ENCODE measurements at regions of chr4 and their contacts with region 1.

Region 1: DNA sequence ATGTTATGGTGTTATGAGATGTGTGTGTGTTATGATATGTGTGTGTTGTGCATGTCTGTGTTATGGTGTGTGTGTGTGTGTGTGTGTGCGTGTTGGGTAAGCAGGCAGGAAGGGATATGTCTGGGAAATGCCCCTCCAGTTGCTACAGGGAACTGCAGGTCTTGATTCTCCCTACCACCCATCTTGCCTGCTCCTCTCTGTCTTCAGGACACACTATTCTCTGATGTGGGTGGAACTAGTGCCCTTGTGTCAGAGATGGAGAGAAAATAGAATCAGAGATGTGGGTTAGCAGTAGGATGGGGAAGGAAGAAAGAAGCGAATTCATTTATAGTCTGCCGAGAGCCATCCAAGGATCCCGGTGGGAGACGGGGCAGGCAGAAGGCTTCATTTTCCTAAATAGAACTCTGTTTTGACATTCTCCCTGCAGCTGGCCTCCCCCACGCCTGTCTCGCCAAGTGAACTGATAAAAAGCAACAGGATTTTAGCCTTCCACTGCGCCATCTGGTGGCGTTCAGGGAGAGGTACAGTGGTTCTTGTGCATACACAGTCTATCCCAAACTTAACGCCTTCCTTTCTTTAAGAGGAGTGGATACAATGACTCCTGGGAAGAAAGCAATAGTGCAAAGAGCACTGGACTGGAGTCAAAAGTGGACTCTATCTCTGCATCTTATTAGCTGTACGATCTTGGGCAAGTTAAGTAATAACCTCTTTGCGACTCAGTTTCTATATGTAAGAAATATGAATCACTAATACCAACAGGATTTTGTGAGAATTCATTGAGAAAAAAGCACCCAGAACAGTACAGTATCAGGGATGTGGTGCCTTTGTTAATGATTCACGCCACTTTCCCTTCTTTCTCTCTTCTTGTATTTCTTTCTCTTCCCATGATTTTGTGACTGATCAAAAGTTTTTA is 14.1 kb upstream of the MGST2 start:
- DNase-seq: peak; percentile 75 to 94 (median 88)
- H3K4me3 ChIP-seq: no peak overlapping the region
- H3K27ac ChIP-seq: no peak overlapping the region
- H3K4me1 ChIP-seq: peaks cover 0 to 5% of the 10 kb centered on the region in 2 donors
- H3K27me3 ChIP-seq: no peaks in the 10 kb centered on the region
- CTCF ChIP-seq: peak; percentile 84 to 94 (median 92)
- POLR2A ChIP-seq: no peak

Region 2: GRCh38 chr4:139099366-139099982 is 552.1 kb before region 1 on chr4:
- intact Hi-C with region 1: no loop called
- DNase-seq: peak; percentile 71 to 84 (median 73)
- H3K4me3 ChIP-seq: no peak overlapping the region
- H3K27ac ChIP-seq: no peak overlapping the region
- H3K4me1 ChIP-seq: no peaks in the 10 kb centered on the region
- H3K27me3 ChIP-seq: no peaks in the 10 kb centered on the region
- CTCF ChIP-seq: peak; percentile 79 to 92 (median 83)
- POLR2A ChIP-seq: no peak

Region 3: DNA sequence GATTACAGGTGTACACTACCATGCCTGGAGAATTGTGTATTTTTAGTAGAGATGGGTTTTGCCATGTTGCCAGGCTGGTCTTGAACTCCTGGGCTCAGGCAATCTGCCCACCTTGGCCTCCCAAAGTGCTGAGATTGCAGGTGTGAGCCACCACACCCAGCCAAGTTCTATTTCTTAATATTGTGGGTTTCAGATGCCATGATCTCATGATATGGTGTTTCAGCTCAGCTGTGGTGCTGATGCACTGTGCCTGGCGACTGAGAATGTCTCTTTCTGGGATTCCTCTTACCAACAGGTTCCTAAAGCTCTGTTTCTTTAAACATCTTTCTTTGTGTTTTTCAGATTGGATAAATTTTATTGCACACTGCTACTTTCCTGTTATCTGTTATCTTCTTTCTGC is 332.0 kb before region 1 on chr4:
- intact Hi-C with region 1: no loop called
- DNase-seq: no peak
- H3K4me3 ChIP-seq: no peak overlapping the region
- H3K27ac ChIP-seq: no peak overlapping the region
- H3K4me1 ChIP-seq: peaks cover 14 to 36% of the 10 kb centered on the region in 2 donors
- H3K27me3 ChIP-seq: no peaks in the 10 kb centered on the region
- CTCF ChIP-seq: no peak
- POLR2A ChIP-seq: no peak

Region 4: DNA sequence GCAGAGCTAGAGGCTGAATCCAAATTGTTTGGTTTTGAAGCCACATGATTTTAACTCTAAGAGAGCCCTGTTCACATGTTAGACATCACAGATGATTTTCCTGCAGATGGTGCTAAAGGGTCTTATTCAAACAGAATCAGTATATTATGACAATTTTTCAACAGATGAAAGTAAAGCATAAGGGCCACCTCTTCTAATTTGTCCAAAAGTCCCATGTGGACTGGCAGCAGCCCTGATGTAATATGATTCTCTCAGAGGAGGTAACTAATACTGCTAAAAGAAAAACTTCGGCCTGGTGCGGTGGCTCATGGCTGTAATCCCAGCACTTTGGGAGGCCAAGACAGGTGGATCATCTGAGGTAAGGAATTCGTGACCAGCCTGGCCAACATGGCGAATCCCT is 69.5 kb before region 1 on chr4:
- intact Hi-C with region 1: no loop called
- DNase-seq: peak in 1 of 7 donors; percentile 39
- H3K4me3 ChIP-seq: no peak overlapping the region
- H3K27ac ChIP-seq: no peak overlapping the region
- H3K4me1 ChIP-seq: no peaks in the 10 kb centered on the region
- H3K27me3 ChIP-seq: no peaks in the 10 kb centered on the region
- CTCF ChIP-seq: peak in 1 of 6 experiments; percentile 16
- POLR2A ChIP-seq: no peak

Region 5: GRCh38 chr4:139603576-139604387 is 47.8 kb before region 1 on chr4:
- intact Hi-C with region 1: loop called (anchors 5 kb)
- DNase-seq: peak in 6 of 7 donors; percentile 33 to 64 (median 60)
- H3K4me3 ChIP-seq: no peak overlapping the region
- H3K27ac ChIP-seq: no peak overlapping the region
- H3K4me1 ChIP-seq: no peaks in the 10 kb centered on the region
- H3K27me3 ChIP-seq: no peaks in the 10 kb centered on the region
- CTCF ChIP-seq: peak; percentile 45 to 83 (median 64)
- POLR2A ChIP-seq: no peak

Region 6: GRCh38 chr4:139849219-139849618 is 197.7 kb after region 1 on chr4:
- intact Hi-C with region 1: no loop called
- DNase-seq: no peak
- H3K4me3 ChIP-seq: no peak overlapping the region
- H3K27ac ChIP-seq: no peak overlapping the region
- H3K4me1 ChIP-seq: peaks cover 0 to 4% of the 10 kb centered on the region in 2 donors
- H3K27me3 ChIP-seq: no peaks in the 10 kb centered on the region
- CTCF ChIP-seq: no peak
- POLR2A ChIP-seq: no peak

Measured in adrenal gland (tissue), 19 donors.